Lower leg skin (tissue), 4 donors: ENCODE measurements at regions of chr11 and their contacts with region 1.

Region 1: DNA sequence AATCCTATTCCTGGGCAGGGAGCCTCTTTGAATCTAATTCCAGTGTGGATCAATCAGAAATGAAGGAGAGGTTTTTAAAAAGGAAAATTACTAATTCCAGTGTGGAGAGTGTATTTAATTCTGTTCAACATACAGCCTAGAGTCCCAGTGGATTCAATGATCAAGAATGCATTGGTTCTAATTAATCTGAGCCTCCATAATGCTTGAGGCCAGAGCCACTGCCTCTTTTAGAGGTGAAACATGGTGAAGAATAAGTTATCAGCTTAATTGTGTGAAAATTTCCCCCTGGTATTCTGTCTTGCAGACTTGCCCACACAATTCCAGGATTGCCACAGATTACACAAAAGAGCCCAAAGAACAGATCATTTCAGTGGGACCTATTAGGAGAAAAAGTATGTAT is 87.7 kb downstream of the TECTA start:
- DNase-seq: no peak
- H3K4me3 ChIP-seq: no peak overlapping the region
- CTCF ChIP-seq: no peak
- POLR2A ChIP-seq: no peak

Region 2: GRCh38 chr11:120527111-120527761 is 661.5 kb before region 1 on chr11:
- intact Hi-C with region 1: loop called (anchors 10 kb)
- DNase-seq: no peak
- H3K4me3 ChIP-seq: no peak overlapping the region
- CTCF ChIP-seq: no peak
- POLR2A ChIP-seq: no peak